ENCODE measurements at regions of chr17 and their contacts with region 1.

Region 1: DNA sequence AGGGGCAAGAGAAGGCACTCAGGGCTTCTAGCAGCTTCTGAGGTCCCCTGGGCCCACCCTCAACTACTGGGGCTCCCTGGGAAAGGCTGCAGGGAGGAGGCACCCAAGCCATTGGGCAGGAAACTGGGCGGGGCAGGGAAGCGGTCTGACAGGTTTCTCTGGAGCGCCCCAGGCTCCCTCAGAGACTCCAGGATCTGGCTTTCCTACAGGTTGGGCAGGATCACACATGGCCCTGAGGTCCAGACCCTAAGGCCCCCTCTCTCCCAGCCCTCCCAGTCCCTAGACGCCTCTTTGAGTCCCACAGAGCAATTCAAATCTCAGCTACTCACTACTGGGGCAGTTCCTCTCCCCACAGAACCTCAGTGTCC is 14.3 kb downstream of the JUP start:
- DNase-seq: peak; percentile 90 to 92
- H3K4me3 ChIP-seq: peak overlapping the region; percentile 20
- H3K4me3 Mint-ChIP-seq: peak overlapping the region; percentile 64
- H3K27ac Mint-ChIP-seq: peak overlapping the region; percentile 92
- H3K4me1 ChIP-seq: peaks cover 58% of the 10 kb centered on the region
- H3K4me1 Mint-ChIP-seq: peaks cover 41% of the 10 kb centered on the region
- H3K27me3 ChIP-seq: no peaks in the 10 kb centered on the region
- H3K27me3 Mint-ChIP-seq: no peaks in the 10 kb centered on the region
- CTCF ChIP-seq: no peak

Region 2: DNA sequence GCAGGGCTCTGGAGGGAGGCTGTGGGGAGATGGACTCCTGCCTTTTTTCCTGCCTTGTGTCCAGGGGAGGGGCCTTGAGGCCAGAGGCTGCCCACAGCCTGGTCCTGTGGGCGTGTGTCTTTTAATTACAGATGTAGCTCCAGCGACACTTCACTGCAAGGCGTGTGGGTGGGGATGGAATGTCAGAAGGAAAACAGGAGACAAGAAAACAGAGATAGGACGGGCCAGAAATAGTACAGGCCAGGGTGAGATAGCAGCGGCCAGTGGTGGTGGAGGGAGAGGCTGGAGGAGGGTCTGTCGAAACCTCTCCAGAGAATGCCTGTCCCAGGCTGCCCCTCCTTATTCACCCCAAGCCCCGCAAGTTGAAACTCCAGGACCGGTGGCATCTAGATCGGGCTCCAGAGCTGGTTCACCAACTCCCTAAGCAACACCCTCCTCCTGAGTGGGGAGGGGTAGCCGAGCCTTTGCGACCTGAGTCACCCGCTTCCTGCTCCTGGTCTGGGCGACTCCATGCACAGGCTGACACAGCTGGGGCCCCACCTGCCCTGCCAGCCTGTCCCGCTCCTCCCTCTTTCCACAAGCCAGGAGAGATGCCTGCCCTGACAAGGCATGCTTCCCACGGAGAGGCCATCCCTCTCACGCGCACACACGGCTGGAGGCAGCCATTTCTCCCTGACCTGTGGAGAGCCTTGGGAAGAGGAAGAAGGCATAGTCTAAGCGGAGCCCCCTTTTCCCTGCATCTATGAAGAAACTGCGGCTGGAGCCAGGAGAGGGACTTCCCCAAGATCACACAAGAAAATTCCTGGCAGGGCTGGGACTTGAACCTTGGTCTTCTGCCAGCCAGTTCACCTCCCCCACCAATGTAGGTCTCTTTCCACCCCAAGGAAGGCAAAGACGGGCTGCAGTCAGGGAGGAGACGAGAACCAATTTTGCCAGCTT is 20.9 kb after region 1 on chr17:
- CTCF ChIA-PET with region 1: interaction called, 4 read pairs
- POLR2A ChIA-PET with region 1: interaction called, 3 read pairs
- intact Hi-C with region 1: loop called (anchors 1 kb)
- DNase-seq: peak; percentile 94 to 97
- H3K4me3 ChIP-seq: peak overlapping the region; percentile 34
- H3K4me3 Mint-ChIP-seq: peak overlapping the region; percentile 67
- H3K27ac Mint-ChIP-seq: peak overlapping the region; percentile 83
- H3K4me1 ChIP-seq: peaks cover 50% of the 10 kb centered on the region
- H3K4me1 Mint-ChIP-seq: peaks cover 53% of the 10 kb centered on the region
- H3K27me3 ChIP-seq: no peaks in the 10 kb centered on the region
- H3K27me3 Mint-ChIP-seq: no peaks in the 10 kb centered on the region
- CTCF ChIP-seq: no peak

Measured in Caco-2 (cell line).